ENCODE measurements at regions of chr3 and their contacts with region 1.

Region 1: GRCh38 chr3:80004618-80005017 is 236.8 kb upstream of the ROBO1 start:
- DNase-seq: no peak
- ATAC-seq: no peak
- H3K4me3 ChIP-seq: no peak overlapping the region
- H3K27ac ChIP-seq: no peak overlapping the region
- H3K4me1 ChIP-seq: no peaks in the 10 kb centered on the region
- H3K27me3 ChIP-seq: no peaks in the 10 kb centered on the region
- CTCF ChIP-seq: no peak
- EP300 ChIP-seq: no peak
- POLR2A ChIP-seq: no peak
- RAD21 ChIP-seq: no peak

Region 2: DNA sequence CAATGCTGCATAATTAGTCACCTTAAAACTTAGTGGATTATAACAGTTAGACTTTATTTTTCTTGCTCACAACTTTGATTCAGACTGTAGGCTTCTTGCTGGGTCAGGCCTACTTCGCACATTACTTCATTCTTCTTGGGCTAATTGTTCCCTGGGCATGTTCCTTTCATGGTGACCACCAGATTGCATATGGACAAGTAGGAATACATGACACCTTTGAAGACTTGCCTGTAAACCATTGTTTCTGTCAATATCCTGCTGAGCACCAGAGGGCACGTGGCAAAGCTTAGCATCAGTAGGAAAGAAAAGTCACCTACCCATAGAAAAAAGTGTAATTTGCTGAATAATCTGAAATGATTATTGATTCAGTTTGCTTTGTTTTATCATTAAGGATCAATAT is 182.5 kb before region 1 on chr3:
- CTCF ChIA-PET with region 1: no interaction called
- POLR2A ChIA-PET with region 1: no interaction called
- in situ Hi-C with region 1: no loop called
- intact Hi-C with region 1: no loop called
- DNase-seq: no peak
- ATAC-seq: no peak
- H3K4me3 ChIP-seq: no peak overlapping the region
- H3K27ac ChIP-seq: no peak overlapping the region
- H3K4me1 ChIP-seq: no peaks in the 10 kb centered on the region
- H3K27me3 ChIP-seq: no peaks in the 10 kb centered on the region
- CTCF ChIP-seq: no peak
- EP300 ChIP-seq: no peak
- POLR2A ChIP-seq: no peak
- RAD21 ChIP-seq: no peak

Region 3: GRCh38 chr3:80017369-80017768 is 12.8 kb after region 1 on chr3:
- CTCF ChIA-PET with region 1: no interaction called
- POLR2A ChIA-PET with region 1: no interaction called
- in situ Hi-C with region 1: no loop called
- intact Hi-C with region 1: loop called (anchors 1 kb)
- DNase-seq: no peak
- ATAC-seq: no peak
- H3K4me3 ChIP-seq: no peak overlapping the region
- H3K27ac ChIP-seq: no peak overlapping the region
- H3K4me1 ChIP-seq: no peaks in the 10 kb centered on the region
- H3K27me3 ChIP-seq: no peaks in the 10 kb centered on the region
- CTCF ChIP-seq: no peak
- EP300 ChIP-seq: no peak
- POLR2A ChIP-seq: no peak
- RAD21 ChIP-seq: no peak

Region 4: GRCh38 chr3:80159990-80160506 is 155.4 kb after region 1 on chr3:
- CTCF ChIA-PET with region 1: no interaction called
- POLR2A ChIA-PET with region 1: no interaction called
- in situ Hi-C with region 1: no loop called
- intact Hi-C with region 1: no loop called
- DNase-seq: no peak
- ATAC-seq: no peak
- H3K4me3 ChIP-seq: no peak overlapping the region
- H3K27ac ChIP-seq: no peak overlapping the region
- H3K4me1 ChIP-seq: no peaks in the 10 kb centered on the region
- H3K27me3 ChIP-seq: no peaks in the 10 kb centered on the region
- CTCF ChIP-seq: no peak
- EP300 ChIP-seq: no peak
- POLR2A ChIP-seq: no peak
- RAD21 ChIP-seq: no peak

Measured in HepG2 (cell line).